ENCODE measurements at regions of chr14 and their contacts with region 1.

Region 1: DNA sequence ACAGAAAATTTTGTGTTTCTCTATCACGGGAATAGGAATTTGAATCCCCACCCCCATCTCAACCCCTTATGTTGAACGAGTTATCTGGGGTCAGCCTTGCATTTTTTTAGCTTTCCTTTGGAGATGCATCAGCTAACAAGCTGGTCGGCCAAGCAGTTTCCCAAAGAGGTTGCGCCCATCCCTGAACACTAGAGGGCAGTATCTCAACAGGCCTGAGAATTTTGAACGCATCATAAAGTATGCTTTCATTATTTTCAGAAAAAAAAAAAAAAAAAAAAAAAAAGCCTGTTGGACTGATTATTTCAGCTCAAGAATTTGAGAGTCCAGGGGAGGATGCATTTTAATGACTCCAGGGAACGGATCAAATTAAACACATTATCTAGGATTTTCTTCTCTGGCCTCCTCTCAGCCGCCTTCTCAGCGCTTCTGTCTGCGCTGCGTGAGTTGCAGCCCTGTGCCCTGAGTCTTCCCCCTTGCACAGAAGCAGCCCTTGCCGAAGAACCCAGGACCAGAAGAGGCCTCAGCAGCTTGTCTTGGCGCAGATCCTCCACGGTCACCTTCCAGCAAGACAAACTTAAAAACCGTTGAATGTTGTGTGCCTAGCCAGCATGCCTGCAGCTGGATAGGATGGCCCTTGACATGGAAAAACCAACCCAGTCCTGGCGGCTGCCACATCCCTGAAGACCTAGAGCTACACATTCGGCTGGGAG is 76.6 kb upstream of the GZMB start:
- DNase-seq: peak in 1 of 2 experiments; percentile 67
- H3K4me3 ChIP-seq: no peak overlapping the region
- H3K27ac ChIP-seq: no peak overlapping the region
- H3K4me1 ChIP-seq: no peaks in the 10 kb centered on the region
- H3K27me3 ChIP-seq: no peaks in the 10 kb centered on the region
- CTCF ChIP-seq: peak; percentile 66 to 68 (median 66)
- EP300 ChIP-seq: no peak
- POLR2A ChIP-seq: no peak
- RAD21 ChIP-seq: peak; percentile 76 to 81

Region 2: DNA sequence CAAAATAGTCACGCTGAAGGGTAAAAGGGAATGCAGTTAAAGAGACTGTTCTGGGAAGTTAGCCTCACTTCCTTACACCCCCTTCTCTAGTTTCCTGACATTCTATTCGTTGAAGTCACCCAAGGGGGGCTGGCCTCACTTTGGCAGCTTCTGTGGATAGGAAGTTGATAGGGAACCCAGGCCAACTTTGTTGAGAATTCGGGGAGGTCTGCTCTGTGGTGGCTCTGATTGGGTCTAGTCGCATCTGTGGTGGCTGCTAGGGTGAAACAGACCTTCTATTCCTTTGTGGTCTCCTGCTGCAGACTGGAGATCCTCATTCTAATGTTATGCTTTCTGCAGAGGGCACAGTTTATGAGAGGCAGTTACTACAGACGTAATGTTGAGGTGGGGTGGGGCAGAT is 47.8 kb before region 1 on chr14:
- CTCF ChIA-PET with region 1: no interaction called
- POLR2A ChIA-PET with region 1: no interaction called
- DNase-seq: no peak
- H3K4me3 ChIP-seq: no peak overlapping the region
- H3K27ac ChIP-seq: no peak overlapping the region
- H3K4me1 ChIP-seq: no peaks in the 10 kb centered on the region
- H3K27me3 ChIP-seq: no peaks in the 10 kb centered on the region
- CTCF ChIP-seq: no peak
- EP300 ChIP-seq: no peak
- POLR2A ChIP-seq: no peak
- RAD21 ChIP-seq: no peak

Region 3: GRCh38 chr14:24695265-24696241 is 15.0 kb before region 1 on chr14:
- CTCF ChIA-PET with region 1: interaction called, 22 read pairs
- POLR2A ChIA-PET with region 1: no interaction called
- DNase-seq: no peak
- H3K4me3 ChIP-seq: no peak overlapping the region
- H3K27ac ChIP-seq: no peak overlapping the region
- H3K4me1 ChIP-seq: peaks cover 0 to 2% (median 0%) of the 10 kb centered on the region in 4 experiments; a peak in 1 of 7 replicates
- H3K27me3 ChIP-seq: no peaks in the 10 kb centered on the region
- CTCF ChIP-seq: no peak
- EP300 ChIP-seq: no peak
- POLR2A ChIP-seq: no peak
- RAD21 ChIP-seq: no peak

Region 4: DNA sequence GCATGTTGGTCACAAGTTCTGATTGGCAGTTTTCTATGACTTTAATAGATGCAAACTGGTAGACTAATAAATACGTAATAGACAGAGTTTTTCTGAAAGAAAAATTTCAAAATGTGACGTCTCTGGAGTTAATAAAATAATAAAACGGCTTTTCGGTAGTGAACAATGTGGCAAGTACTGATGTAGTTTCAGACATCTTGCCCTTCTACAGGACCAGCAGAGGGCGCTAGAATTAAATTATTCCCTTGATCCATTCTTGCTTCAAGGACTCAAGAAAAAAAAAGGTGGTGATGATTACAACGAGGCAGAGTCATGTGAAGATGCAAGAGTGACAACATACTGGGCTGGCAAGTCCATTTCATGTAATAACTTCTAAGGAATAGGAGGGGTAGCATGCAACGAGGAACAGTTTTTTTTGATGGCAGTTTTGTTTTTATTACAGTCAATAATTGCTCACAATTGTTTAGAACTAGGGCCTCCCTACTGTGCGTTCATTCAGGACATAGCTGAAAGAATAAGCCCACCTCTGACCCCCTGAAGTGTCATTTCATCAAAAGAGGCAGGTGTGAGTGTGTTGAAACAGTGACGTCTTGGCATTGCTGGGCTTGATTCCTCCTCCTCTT is 24.4 kb after region 1 on chr14:
- CTCF ChIA-PET with region 1: interaction called, 12 read pairs
- POLR2A ChIA-PET with region 1: no interaction called
- DNase-seq: no peak
- H3K4me3 ChIP-seq: no peak overlapping the region
- H3K27ac ChIP-seq: no peak overlapping the region
- H3K4me1 ChIP-seq: peaks cover 0 to 3% (median 0%) of the 10 kb centered on the region in 4 experiments; a peak in 3 of 7 replicates
- H3K27me3 ChIP-seq: no peaks in the 10 kb centered on the region
- CTCF ChIP-seq: peak in 2 of 3 experiments; percentile 61 to 65; a peak in 3 of 4 replicates
- EP300 ChIP-seq: no peak
- POLR2A ChIP-seq: no peak
- RAD21 ChIP-seq: peak; percentile 70 to 75

Region 5: DNA sequence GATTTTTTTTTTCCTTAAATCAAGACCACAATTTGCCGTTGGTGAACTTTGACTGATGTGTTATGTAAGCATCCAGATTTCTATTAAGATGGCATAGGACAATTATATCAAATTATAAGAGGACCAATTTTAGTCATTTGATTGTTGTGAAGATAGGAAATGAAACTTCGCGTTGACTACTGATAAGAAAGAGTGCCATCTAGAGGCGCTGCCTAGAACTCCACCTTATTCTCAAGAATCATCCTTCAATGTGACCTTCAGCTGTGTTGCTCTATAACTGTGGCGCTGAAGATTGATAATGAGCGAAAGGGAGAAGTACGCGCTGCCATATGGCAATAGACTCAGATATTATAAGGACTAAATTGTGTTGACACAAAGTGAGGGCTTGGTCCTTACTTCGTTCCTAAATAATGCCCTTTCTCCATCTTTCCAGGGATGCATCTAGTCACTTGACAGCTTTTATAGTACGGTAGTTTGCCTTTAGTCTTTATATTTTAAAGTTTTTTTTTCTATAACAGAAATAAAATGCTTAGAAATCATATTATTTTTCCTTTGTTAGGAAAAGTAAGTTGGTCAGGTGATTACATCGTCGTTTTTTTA is 690.1 kb after region 1 on chr14:
- CTCF ChIA-PET with region 1: interaction called, 17 read pairs
- POLR2A ChIA-PET with region 1: no interaction called
- DNase-seq: peak in 1 of 2 experiments; percentile 72
- H3K4me3 ChIP-seq: no peak overlapping the region
- H3K27ac ChIP-seq: no peak overlapping the region
- H3K4me1 ChIP-seq: no peaks in the 10 kb centered on the region
- H3K27me3 ChIP-seq: no peaks in the 10 kb centered on the region
- CTCF ChIP-seq: peak in 2 of 3 experiments; percentile 54 to 70; a peak in 3 of 4 replicates
- EP300 ChIP-seq: no peak
- POLR2A ChIP-seq: no peak
- RAD21 ChIP-seq: peak; percentile 60 to 65

Region 6: GRCh38 chr14:25411781-25412757 is 701.5 kb after region 1 on chr14:
- CTCF ChIA-PET with region 1: interaction called, 15 read pairs
- POLR2A ChIA-PET with region 1: no interaction called
- DNase-seq: peak in 1 of 2 experiments; percentile 54
- H3K4me3 ChIP-seq: no peak overlapping the region
- H3K27ac ChIP-seq: no peak overlapping the region
- H3K4me1 ChIP-seq: no peaks in the 10 kb centered on the region
- H3K27me3 ChIP-seq: no peaks in the 10 kb centered on the region
- CTCF ChIP-seq: peak; percentile 71 to 86 (median 85)
- EP300 ChIP-seq: no peak
- POLR2A ChIP-seq: no peak
- RAD21 ChIP-seq: peak; percentile 76 to 85

Measured in H1 (cell line).